ENCODE measurements at regions of chr5 and their contacts with region 1.

Region 1: GRCh38 chr5:134648425-134649162 is at the start of gene SEC24A:
- DNase-seq: peak; percentile 89 to 91 (median 90)
- ATAC-seq: peak; percentile 91
- H3K4me3 ChIP-seq: peak within 1 kb of the TSS; percentile 95
- H3K27ac ChIP-seq: peak within 1 kb of the TSS; percentile 97
- H3K4me1 ChIP-seq: peaks cover 0 to 15% of the 10 kb centered on the region in 2 experiments; a peak in 1 of 5 replicates
- H3K27me3 ChIP-seq: no peaks in the 10 kb centered on the region
- CTCF ChIP-seq: 0 out of 6 replicates have a peak, but pooled peaks of 1 of the 3 experiments have one; percentile 0
- EP300 ChIP-seq: 0 out of 2 replicates have a peak, but pooled peaks have one; percentile 1
- POLR2A ChIP-seq: peak; percentile 89
- RAD21 ChIP-seq: no peak
- polyA plus RNA-seq, gene SEC24A: 7.9 to 11.1 TPM

Region 2: GRCh38 chr5:132915681-132916080 is 1732.9 kb before region 1 on chr5:
- CTCF ChIA-PET with region 1: no interaction called
- POLR2A ChIA-PET with region 1: no interaction called
- in situ Hi-C with region 1: loop called (anchors 10 kb)
- intact Hi-C with region 1: no loop called
- DNase-seq: peak in 1 of 4 experiments; percentile 21
- ATAC-seq: peak; percentile 67
- H3K4me3 ChIP-seq: no peak overlapping the region
- H3K27ac ChIP-seq: no peak overlapping the region
- H3K4me1 ChIP-seq: no peaks in the 10 kb centered on the region
- H3K27me3 ChIP-seq: no peaks in the 10 kb centered on the region
- CTCF ChIP-seq: no peak
- EP300 ChIP-seq: no peak
- POLR2A ChIP-seq: no peak
- RAD21 ChIP-seq: no peak

Region 3: DNA sequence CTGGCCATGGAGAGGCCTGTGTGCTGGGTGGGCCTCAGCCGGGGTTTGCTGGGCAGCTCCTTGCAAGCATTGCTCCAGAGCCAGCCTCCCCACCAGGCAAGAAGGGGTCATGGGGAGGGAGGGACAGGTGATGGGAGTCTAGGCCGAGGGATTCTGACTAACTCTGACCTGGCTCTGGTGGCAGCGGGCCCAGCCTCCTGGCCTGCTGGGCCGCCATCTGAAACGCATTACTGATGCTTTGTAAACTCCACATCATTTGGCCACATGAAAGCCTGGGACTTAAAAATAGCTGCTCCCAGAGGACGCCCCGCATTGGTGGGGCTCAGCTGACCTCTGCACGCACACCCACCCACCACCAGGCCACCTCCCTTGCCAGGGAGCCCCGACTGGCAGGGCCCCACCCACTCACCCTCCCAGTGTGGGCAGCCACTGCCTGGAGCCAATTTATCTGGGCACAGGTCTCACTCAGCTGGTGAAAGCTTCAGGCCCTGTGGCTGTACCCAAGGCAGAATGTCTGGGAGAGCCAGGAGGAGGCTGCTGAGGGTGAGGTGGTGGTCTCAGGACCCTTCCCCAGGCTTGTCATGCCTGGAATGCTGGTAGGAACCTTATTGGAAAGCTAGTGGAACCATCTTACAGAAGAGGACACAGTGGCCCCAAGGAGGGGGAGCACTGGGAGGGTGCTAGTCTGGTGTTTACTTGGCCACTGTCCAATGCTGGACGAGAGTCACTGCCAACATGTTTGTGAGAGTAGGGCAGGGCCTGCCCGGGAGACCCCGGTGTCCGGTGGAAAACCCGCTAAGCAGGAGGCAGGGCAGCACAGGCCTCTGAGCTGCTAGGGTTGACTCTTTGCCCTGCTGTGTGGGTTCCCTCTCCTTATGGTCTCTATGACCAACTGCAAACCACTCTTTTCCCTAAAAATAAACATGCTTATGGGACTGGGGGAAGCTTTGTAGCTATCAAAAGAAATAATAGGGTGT is 523.3 kb before region 1 on chr5:
- CTCF ChIA-PET with region 1: no interaction called
- POLR2A ChIA-PET with region 1: no interaction called
- in situ Hi-C with region 1: no loop called
- intact Hi-C with region 1: no loop called
- DNase-seq: no peak
- ATAC-seq: no peak
- H3K4me3 ChIP-seq: no peak overlapping the region
- H3K27ac ChIP-seq: no peak overlapping the region
- H3K4me1 ChIP-seq: peaks cover 0 to 19% of the 10 kb centered on the region in 2 experiments; a peak in 2 of 5 replicates
- H3K27me3 ChIP-seq: no peaks in the 10 kb centered on the region
- CTCF ChIP-seq: no peak
- EP300 ChIP-seq: no peak
- POLR2A ChIP-seq: no peak
- RAD21 ChIP-seq: no peak

Region 4: DNA sequence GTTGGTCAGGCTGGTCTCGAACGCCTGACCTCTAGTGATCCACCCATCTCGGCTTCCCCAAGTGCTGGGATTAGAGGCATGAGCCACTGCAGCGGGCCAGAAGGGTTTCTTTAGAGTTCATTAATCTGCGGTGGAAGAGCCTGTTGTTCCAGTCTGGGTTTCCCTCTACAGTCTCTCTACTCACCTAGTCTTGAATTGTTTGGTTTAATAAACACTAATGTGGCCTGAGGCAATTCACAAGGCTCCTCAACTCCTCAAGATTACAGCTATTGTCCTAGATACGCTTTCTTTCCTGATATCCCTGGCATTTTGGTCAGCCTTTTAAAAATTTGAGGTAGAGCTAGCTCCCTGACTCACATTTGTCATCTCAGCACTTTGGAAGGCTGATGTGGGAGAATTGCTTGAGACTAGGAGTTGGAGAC is 11.4 kb before region 1 on chr5:
- CTCF ChIA-PET with region 1: no interaction called
- POLR2A ChIA-PET with region 1: interaction called, 18 read pairs
- in situ Hi-C with region 1: no loop called
- intact Hi-C with region 1: loop called (anchors 1 kb)
- DNase-seq: no peak
- ATAC-seq: no peak
- H3K4me3 ChIP-seq: no peak overlapping the region
- H3K27ac ChIP-seq: no peak overlapping the region
- H3K4me1 ChIP-seq: peaks cover 3 to 13% of the 10 kb centered on the region in 2 experiments; a peak in 3 of 5 replicates
- H3K27me3 ChIP-seq: no peaks in the 10 kb centered on the region
- CTCF ChIP-seq: no peak
- EP300 ChIP-seq: no peak
- POLR2A ChIP-seq: no peak
- RAD21 ChIP-seq: no peak

Measured in K562 (cell line).